Spleen (tissue), 13 donors: ENCODE measurements at regions of chr1 and their contacts with region 1.

Region 1: GRCh38 chr1:16055613-16056520 is 12.3 kb downstream of the CLCNKB start:
- DNase-seq: peak; percentile 93
- H3K4me3 ChIP-seq: no peak overlapping the region
- H3K27ac ChIP-seq: no peak overlapping the region
- H3K4me1 ChIP-seq: peaks cover 0 to 8% (median 3%) of the 10 kb centered on the region in 6 donors
- H3K27me3 ChIP-seq: peaks cover 0 to 11% (median 0%) of the 10 kb centered on the region in 7 donors
- CTCF ChIP-seq: peak; percentile 64 to 93 (median 89)
- POLR2A ChIP-seq: no peak

Region 2: GRCh38 chr1:15799004-15799936 is 256.6 kb before region 1 on chr1:
- intact Hi-C with region 1: loop called (anchors 10 kb)
- DNase-seq: no peak
- H3K4me3 ChIP-seq: no peak overlapping the region
- H3K27ac ChIP-seq: peak overlapping the region in 5 of 8 donors; percentile 48 to 74 (median 72)
- H3K4me1 ChIP-seq: peaks cover 0 to 26% (median 10%) of the 10 kb centered on the region in 6 donors
- H3K27me3 ChIP-seq: no peaks in the 10 kb centered on the region
- CTCF ChIP-seq: no peak
- POLR2A ChIP-seq: no peak

Region 3: DNA sequence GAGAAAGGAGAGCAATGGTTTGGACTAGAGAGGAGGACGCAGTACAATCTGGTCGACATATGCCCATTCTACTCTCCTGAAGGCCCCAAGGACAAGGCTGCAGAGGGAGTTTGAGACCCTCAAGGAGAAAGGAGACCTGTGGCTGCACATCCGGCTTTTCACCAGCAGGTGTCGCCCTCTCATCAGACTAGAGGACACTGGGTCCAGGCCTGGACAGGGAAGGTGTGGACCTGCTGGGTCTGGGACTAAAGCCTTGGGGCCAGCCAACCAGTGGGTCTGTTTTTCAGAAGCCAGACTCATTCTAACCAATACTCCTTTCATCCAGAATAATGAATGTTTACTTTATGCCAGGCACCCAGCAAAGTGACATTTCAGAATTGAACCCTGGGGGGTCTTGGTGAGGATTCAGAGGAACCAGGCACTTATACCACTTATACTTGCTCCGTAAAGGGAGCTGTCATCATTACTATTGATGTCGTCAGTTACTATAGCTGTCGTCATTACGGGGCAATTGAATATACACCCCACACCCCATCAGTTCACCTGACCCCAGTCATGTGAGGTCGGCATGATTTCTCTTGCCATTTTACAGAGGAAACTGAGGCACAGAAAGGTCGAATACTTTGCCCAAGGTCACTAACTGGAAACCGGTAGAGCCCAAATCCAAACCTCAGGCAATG is 46.7 kb before region 1 on chr1:
- intact Hi-C with region 1: loop called (anchors 10 kb)
- DNase-seq: peak; percentile 92
- H3K4me3 ChIP-seq: no peak overlapping the region
- H3K27ac ChIP-seq: no peak overlapping the region
- H3K4me1 ChIP-seq: peaks cover 6 to 44% (median 15%) of the 10 kb centered on the region in 6 donors
- H3K27me3 ChIP-seq: peaks cover 0 to 17% (median 0%) of the 10 kb centered on the region in 7 donors
- CTCF ChIP-seq: peak; percentile 80 to 96 (median 94)
- POLR2A ChIP-seq: no peak